ENCODE measurements at regions of chr11 and their contacts with region 1.

Region 1: GRCh38 chr11:130427581-130428315 is 661 bp downstream of the ADAMTS8 start:
- DNase-seq: peak; percentile 48

Region 2: GRCh38 chr11:130213143-130213978 is 214.4 kb before region 1 on chr11:
- in situ Hi-C with region 1: loop called (anchors 10 kb)
- DNase-seq: peak; percentile 58

Region 3: GRCh38 chr11:130636722-130637517 is 209.2 kb after region 1 on chr11:
- in situ Hi-C with region 1: no loop called
- DNase-seq: no peak